Activated T-helper 1 cell treated with anti-CD3 and anti-CD28 coated beads, Interleukin-12 subunit alpha, Interleukin-12 subunit beta, Interleukin-2, Interleukin-4 antibody, amounts not matched to agents 30 ng/mL and 10 ng/mL and 1 ng/mL, durations not matched to agents 14 hours and 24 hours and 36 hours (primary cell): ENCODE measurements at regions of chr9 and their contacts with region 1.

Region 1: DNA sequence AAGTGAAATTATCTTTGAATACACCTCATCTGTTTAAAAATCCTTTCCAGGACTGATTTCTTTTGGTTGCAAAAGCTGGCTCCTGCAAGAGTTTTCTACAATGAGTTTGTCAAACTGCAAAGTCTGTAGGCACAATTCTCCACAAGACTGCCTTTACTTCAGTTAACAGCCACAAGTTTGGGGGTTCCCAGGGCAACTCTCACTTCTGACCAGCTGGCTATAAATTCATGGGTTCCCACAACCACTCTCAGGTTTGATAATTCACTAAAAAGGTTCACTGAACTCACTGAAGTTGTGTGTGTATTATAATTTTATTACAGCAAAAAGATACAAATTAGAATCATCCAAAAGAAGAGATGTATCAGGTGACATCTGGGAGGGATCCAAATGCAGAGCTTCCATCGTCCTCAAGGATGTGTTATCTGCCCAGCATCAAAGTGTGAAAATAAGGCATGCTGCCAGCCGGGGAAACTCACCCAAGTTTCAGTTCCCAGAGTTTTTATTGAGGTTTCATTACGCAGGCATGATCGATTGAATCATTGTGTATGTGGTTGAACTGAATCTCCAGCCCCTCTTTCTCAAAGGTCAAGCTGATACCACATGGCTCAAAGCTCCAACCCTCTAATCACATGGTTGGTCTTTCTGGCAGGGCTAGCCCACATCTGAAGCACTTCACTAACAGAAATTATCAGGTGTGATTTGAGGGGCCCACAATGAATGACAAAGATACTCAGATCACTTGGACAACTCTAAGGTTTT is 19.0 kb upstream of the PSIP1 start:
- DNase-seq: no peak
- H3K4me3 Mint-ChIP-seq: no peak overlapping the region
- H3K27ac Mint-ChIP-seq: no peak overlapping the region
- H3K4me1 Mint-ChIP-seq: no peaks in the 10 kb centered on the region
- H3K27me3 Mint-ChIP-seq: peaks cover 4% of the 10 kb centered on the region

Region 2: DNA sequence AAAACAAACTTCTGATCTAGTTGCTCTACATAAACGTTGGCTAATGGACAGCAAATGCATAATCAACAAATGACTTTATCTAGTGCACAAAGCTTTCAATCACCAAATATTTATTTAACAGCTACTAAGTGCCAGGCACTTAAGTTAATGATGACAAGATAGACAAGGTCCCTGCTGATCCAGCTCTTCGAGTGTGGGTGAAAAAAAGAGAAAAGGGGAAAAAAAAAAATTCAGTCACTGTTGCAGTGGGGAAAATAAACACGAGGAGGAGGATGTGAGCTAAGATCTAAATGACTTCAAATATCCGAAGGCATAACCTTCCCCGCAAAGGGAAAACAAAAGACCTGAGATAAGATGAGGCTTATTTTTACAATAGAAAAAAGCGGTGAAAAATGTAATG is 28.6 kb before region 1 on chr9:
- intact Hi-C with region 1: loop called (anchors 1 kb)
- DNase-seq: no peak
- H3K4me3 Mint-ChIP-seq: no peak overlapping the region
- H3K27ac Mint-ChIP-seq: peak overlapping the region; percentile 25
- H3K4me1 Mint-ChIP-seq: peaks cover 46% of the 10 kb centered on the region
- H3K27me3 Mint-ChIP-seq: no peaks in the 10 kb centered on the region

Region 3: DNA sequence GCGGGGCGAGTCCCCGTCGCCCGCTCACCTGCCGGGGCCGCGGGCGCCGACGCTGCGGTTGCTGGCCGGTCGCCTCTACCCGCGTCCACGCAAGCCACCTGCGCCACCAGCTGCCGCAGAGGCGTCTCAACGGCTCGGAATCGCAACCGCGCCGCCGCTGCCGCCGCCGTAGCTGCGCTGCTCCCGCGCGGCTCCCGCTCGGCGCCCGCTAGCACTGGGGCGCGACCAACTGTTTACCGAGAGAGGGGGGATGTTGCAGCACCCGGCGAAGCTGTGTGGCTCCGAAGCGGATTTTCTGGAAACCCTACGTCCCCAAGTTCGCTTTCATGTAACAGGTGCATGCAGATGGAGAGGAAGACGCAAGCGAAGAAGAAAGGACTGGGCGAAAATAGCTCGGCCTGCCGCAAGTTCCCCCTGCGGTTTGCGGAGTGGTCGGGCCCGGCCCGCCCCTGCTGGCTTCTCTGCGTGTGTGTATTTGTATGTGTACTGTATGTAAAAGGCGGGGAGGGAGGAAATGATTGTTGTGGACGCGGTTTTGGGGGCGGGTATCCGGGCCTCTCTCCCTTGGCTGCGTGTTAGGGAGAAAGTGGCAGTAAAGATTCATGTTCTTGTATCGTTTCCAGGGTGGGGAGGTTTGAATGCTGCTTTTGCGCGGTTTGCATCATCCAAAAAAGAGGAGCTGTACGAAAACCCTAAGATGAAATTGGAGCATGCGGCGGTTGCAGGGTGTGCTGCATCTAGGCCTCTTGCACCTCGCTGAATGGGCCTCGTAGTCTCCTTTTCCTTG is 18.8 kb before region 1 on chr9 and contains the start of gene PSIP1:
- intact Hi-C with region 1: loop called (anchors 2 kb)
- DNase-seq: peak; percentile 84
- H3K4me3 Mint-ChIP-seq: peak within 1 kb of the TSS; percentile 96
- H3K27ac Mint-ChIP-seq: peak within 1 kb of the TSS; percentile 100
- H3K4me1 Mint-ChIP-seq: peaks cover 52% of the 10 kb centered on the region
- H3K27me3 Mint-ChIP-seq: peaks cover 4% of the 10 kb centered on the region
- total RNA-seq, gene PSIP1: 90.6 and 95.3 TPM in 2 replicates

Region 4: DNA sequence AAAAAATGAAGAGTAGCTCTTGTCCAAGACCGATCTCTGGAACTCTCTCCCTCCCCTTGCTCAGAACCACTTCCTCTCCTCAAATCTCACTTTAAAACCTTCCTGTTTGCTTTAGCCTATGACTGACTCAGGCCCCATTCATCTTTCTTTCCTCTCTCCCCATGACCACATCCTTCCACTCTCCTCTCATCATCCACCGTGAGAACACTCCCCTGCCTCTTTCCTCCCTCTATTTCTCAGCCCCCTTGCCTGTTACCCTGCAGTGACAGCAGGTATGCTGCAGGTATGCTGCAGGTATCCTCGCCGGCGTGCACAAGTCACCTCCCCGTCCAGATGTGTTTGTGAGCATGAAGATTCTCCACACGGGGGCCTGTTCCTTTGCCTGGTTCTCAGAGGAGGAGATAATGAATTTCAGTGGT is 528.4 kb after region 1 on chr9:
- intact Hi-C with region 1: no loop called
- DNase-seq: no peak
- H3K4me3 Mint-ChIP-seq: no peak overlapping the region
- H3K27ac Mint-ChIP-seq: peak overlapping the region; percentile 4
- H3K4me1 Mint-ChIP-seq: peaks cover 13% of the 10 kb centered on the region
- H3K27me3 Mint-ChIP-seq: no peaks in the 10 kb centered on the region